ENCODE measurements at regions of chr11 and their contacts with region 1.

Region 1: GRCh38 chr11:45917623-45918330 is at the start of gene PEX16:
- DNase-seq: peak; percentile 92 to 99 (median 97)
- H3K4me3 ChIP-seq: peak within 1 kb of the TSS; percentile 97
- H3K4me3 Mint-ChIP-seq: peak within 1 kb of the TSS; percentile 92 to 98 (median 96)
- H3K27ac ChIP-seq: peak within 1 kb of the TSS; percentile 90
- H3K27ac Mint-ChIP-seq: peak within 1 kb of the TSS; percentile 88 to 99 (median 98)
- H3K4me1 ChIP-seq: peaks cover 29% of the 10 kb centered on the region
- H3K4me1 Mint-ChIP-seq: peaks cover 46 to 72% (median 55%) of the 10 kb centered on the region in 3 donors
- H3K27me3 ChIP-seq: no peaks in the 10 kb centered on the region
- H3K27me3 Mint-ChIP-seq: peaks cover 0 to 4% of the 10 kb centered on the region in 2 donors
- total RNA-seq, gene PEX16: 35.1 to 43.2 TPM

Region 2: DNA sequence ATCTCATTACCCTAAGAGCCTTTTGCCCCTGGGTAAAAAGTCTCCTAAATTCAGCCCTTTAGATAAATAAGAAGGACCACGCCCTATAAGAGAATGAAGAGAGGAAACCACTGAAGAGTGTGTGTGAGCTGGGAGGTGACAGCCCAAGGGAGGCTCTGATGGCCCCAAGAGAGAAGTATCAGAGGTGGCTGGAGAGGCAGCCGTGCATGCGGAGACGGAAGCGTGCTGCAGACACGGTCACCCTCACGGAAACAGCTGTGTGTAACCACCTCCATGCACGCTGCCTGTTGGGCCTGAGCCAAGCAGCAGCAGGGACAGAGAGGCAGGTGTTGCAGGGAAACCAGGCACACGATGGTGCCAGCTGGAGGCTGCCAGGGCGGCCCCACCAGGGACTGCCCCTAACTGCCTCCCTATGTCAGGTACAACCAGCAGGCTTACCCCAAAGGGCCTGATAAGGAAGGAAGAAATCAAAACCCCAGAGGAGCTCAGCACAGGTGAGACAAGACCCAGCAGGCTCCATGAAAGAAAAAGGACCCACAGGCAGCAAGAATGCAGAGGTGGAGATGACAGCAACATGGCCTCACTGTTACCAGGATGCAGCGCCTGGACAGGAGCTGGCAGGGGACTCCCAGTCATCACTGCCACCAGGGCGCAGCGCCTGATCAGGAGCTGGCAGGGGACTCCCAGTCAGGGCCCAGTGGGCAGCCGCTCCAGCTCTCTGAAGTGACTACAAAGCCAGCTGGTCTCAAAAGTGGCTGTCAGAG is 12.4 kb after region 1 on chr11:
- CTCF ChIA-PET with region 1: interaction called, 7 read pairs
- POLR2A ChIA-PET with region 1: interaction called, 13 read pairs
- DNase-seq: peak in 4 of 5 donors; percentile 31 to 71 (median 46)
- H3K4me3 ChIP-seq: no peak overlapping the region
- H3K4me3 Mint-ChIP-seq: peak overlapping the region; percentile 4 to 81 (median 75)
- H3K27ac ChIP-seq: peak overlapping the region; percentile 14
- H3K27ac Mint-ChIP-seq: peak overlapping the region; percentile 84 to 95 (median 92)
- H3K4me1 ChIP-seq: peaks cover 26% of the 10 kb centered on the region
- H3K4me1 Mint-ChIP-seq: peaks cover 34 to 65% (median 36%) of the 10 kb centered on the region in 3 donors
- H3K27me3 ChIP-seq: no peaks in the 10 kb centered on the region
- H3K27me3 Mint-ChIP-seq: peaks cover 0 to 4% of the 10 kb centered on the region in 2 donors

Region 3: DNA sequence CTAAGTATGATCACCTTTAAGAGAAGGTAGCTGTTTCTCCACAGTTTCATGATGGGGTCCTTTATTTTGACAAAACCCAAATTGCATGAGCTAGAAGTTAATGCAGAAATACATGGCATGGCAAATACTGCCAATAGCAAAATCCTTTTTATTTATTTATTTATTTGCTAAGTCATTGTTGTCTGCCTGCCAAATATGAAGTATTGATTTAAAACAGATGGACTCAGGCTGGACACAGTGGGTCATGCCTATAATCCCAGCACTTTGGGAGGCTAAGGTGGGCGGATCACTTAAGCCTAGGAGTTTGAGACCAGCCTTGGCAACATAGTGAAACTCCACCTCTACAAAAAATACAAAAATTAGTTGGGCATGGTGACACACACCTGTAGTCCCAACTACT is 57.0 kb after region 1 on chr11:
- CTCF ChIA-PET with region 1: no interaction called
- POLR2A ChIA-PET with region 1: no interaction called
- DNase-seq: no peak
- H3K4me3 ChIP-seq: no peak overlapping the region
- H3K4me3 Mint-ChIP-seq: no peak overlapping the region
- H3K27ac ChIP-seq: no peak overlapping the region
- H3K27ac Mint-ChIP-seq: peak overlapping the region in 3 of 8 donors; percentile 8 to 15 (median 12)
- H3K4me1 ChIP-seq: no peaks in the 10 kb centered on the region
- H3K4me1 Mint-ChIP-seq: peaks cover 0 to 1% (median 0%) of the 10 kb centered on the region in 3 donors
- H3K27me3 ChIP-seq: no peaks in the 10 kb centered on the region
- H3K27me3 Mint-ChIP-seq: no peaks in the 10 kb centered on the region

Measured in CD8-positive, alpha-beta memory T cell (primary cell).